ENCODE measurements at regions of chr11 and their contacts with region 1.

Region 1: DNA sequence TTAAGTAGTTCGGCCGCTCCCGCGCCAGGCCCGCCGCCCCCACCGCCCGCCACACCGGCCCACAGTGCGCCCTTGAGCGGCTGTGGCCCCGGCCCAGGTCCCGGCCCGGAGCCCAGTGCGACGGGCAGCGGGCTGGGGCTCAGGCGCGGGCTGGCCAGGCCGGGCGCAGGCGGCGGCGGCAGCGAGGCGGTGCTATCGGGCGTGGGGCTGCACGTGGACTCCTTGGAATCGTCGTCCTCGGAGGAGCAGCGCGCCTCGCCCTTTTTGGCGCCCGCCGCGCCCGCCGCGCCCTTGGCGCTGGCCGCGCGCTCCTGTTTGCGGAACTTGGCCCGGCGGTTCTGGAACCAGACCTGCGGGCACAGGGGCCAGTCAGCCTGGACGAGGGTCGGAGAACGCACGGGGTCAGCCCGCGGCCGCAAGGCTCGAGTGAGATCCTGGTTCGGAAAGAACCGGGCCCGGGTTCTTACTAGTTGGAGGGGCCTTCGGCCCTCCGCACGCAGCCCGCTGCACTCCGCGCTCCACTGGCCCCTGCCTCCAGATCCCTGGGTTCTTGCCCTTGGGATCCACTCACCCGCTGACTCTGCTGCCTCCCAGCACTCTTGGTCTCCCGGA is 4.0 kb downstream of the PHOX2A start:
- DNase-seq: no peak
- H3K4me3 ChIP-seq: peak overlapping the region; percentile 18
- CTCF ChIP-seq: no peak

Region 2: GRCh38 chr11:72349616-72350218 is 109.8 kb after region 1 on chr11:
- in situ Hi-C with region 1: loop called (anchors 10 kb)
- DNase-seq: no peak
- H3K4me3 ChIP-seq: no peak overlapping the region
- CTCF ChIP-seq: no peak